Activated T-helper 1 cell treated with anti-CD3 and anti-CD28 coated beads, Interleukin-12 subunit alpha, Interleukin-12 subunit beta, Interleukin-2, Interleukin-4 antibody, amounts not matched to agents 30 ng/mL and 10 ng/mL and 1 ng/mL, durations not matched to agents 14 hours and 24 hours and 36 hours (primary cell): ENCODE measurements at regions of chr2 and their contacts with region 1.

Region 1: GRCh38 chr2:20015472-20016083 is 3.1 kb upstream of the MATN3 start:
- DNase-seq: no peak
- H3K4me3 Mint-ChIP-seq: no peak overlapping the region
- H3K27ac Mint-ChIP-seq: no peak overlapping the region
- H3K4me1 Mint-ChIP-seq: no peaks in the 10 kb centered on the region
- H3K27me3 Mint-ChIP-seq: peaks cover 47% of the 10 kb centered on the region

Region 2: DNA sequence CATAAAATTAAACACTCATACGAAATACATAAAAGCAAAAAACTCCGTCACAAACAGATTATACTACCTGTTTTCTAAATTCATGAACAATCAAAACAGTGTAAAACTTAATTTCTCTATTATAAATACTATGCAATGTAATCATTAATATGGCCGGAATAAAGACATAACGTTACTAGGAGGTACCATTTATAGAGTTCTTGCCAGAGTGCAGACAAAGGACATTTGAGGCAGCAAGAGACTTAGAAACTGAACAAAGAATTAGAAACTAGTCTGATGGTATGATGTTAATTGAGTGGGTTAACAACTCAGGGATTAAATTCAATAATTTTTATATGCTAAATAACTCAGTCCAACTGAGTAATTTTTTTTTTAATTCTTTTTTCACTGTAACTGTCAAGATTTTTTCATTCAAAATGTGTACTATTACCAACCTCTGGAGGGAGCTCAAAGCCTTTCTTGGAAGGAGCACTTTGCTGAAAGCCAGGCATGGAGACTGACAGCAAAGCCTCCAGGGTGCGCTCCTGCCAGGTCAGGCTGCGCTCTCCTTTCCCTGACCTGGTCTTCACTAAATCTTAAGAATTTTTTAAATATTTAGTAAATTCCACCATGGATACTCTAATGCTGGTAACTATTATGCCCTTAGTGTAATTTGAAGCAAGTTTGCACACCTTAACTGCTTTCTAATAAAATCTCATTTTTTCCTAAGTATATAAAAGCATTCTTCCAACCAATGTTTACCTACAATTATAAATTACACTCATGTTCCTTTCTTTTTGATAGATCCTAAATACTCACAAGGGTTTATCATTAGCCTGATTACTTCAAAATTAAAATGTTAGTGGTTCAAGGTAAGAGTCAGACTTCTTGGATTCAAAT is 59.8 kb before region 1 on chr2:
- intact Hi-C with region 1: loop called (anchors 1 kb)
- DNase-seq: peak; percentile 24
- H3K4me3 Mint-ChIP-seq: no peak overlapping the region
- H3K27ac Mint-ChIP-seq: no peak overlapping the region
- H3K4me1 Mint-ChIP-seq: no peaks in the 10 kb centered on the region
- H3K27me3 Mint-ChIP-seq: no peaks in the 10 kb centered on the region

Region 3: DNA sequence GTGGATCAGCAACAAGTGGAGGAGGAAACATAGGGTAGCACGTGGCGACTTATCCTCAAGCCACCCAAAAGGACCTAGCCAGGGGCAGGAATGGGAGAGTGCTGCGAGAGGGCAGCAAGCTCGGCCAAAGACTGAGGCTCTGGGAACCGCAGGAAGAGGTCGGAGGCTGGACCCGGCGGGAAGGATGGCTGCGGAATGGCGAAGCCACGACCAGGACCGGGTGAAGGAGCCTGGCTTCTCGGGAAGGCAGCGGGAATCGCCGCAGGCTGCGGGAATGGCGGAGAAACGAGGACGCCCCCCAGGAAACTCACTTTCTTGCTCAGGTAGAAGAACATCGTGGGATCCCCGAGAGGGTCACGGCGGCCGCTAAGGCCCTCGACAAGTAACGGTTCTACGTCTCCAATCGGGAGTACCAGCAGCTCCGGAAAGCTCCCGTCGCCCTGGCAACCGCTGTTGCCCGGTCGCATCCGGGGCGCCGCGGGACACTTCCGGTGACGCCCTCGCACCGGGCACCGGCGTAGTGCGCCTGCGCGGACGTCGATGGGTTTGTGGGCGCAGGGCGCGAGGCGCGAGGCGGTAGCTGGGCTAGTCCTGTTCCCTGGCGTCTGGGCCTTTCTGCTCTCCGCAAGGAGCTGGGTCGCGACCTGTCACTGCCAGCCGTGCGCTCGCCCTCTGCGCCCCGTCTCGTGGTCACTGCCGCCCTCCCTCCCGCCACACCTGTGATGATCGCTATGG is 25.7 kb before region 1 on chr2 and contains the start of gene WDR35:
- intact Hi-C with region 1: loop called (anchors 2 kb)
- DNase-seq: peak; percentile 92
- H3K4me3 Mint-ChIP-seq: peak within 1 kb of the TSS; percentile 90
- H3K27ac Mint-ChIP-seq: peak within 1 kb of the TSS; percentile 69
- H3K4me1 Mint-ChIP-seq: peaks cover 19% of the 10 kb centered on the region
- H3K27me3 Mint-ChIP-seq: peaks cover 30% of the 10 kb centered on the region
- total RNA-seq, gene WDR35: 7.7 and 7.8 TPM in 2 replicates

Region 4: GRCh38 chr2:20313659-20314058 is 298.1 kb after region 1 on chr2:
- intact Hi-C with region 1: no loop called
- DNase-seq: no peak
- H3K4me3 Mint-ChIP-seq: no peak overlapping the region
- H3K27ac Mint-ChIP-seq: no peak overlapping the region
- H3K4me1 Mint-ChIP-seq: peaks cover 24% of the 10 kb centered on the region
- H3K27me3 Mint-ChIP-seq: no peaks in the 10 kb centered on the region